Mammary epithelial cell (primary cell): ENCODE measurements at regions of chr11 and their contacts with region 1.

Region 1: DNA sequence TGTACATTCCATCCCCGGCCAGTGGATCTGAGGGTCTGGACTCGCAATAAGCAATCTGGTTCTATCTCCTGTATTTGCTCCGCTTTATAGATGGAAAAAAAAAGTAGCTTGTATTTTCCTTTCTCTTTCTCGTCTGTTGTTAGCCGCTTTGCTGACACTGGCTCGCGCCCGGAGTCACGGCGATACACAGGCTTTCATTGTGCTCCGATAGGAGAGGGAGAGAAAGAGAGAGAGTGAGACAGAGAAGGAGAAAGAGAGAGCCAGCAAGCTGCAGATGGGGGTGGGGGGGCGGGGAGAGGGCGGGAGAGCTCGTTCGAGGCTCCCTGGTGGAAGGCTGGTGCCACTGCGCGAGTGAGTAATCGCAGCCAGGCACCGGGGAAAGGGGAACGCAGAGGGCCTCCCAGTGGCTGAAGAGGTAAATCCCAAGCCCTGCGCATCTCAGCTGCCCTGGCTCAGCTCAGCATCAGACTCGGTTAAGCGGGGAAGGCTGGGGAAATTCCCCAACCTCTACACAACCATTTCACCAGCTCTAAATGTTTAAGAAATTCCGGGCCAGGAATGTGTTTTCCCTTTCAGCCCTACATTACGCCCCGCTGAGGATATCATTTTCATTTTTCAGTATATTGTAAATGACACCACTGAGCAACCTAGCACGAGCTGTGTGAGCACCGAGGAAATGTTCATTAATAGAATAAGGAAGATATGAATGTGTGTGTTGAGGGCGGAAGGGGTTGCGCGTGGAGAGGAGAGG is at the start of gene MAML2:
- DNase-seq: peak; percentile 92
- H3K4me3 ChIP-seq: peak within 1 kb of the TSS; percentile 58 to 79 (median 77)
- H3K27ac ChIP-seq: peak within 1 kb of the TSS; percentile 79
- H3K4me1 ChIP-seq: peaks cover 39% of the 10 kb centered on the region
- H3K27me3 ChIP-seq: no peaks in the 10 kb centered on the region
- CTCF ChIP-seq: peak; percentile 86 to 96
- total RNA-seq, gene MAML2: 9.5 to 14.2 TPM

Region 2: GRCh38 chr11:95849087-95849825 is 493.9 kb before region 1 on chr11:
- CTCF ChIA-PET with region 1: interaction called, 9 read pairs
- dilution Hi-C with region 1: no loop called
- in situ Hi-C with region 1: no loop called
- intact Hi-C with region 1: loop called (anchors 1 kb)
- DNase-seq: peak; percentile 67
- H3K4me3 ChIP-seq: no peak overlapping the region
- H3K27ac ChIP-seq: no peak overlapping the region
- H3K4me1 ChIP-seq: no peaks in the 10 kb centered on the region
- H3K27me3 ChIP-seq: no peaks in the 10 kb centered on the region
- CTCF ChIP-seq: peak; percentile 47 to 53

Region 3: DNA sequence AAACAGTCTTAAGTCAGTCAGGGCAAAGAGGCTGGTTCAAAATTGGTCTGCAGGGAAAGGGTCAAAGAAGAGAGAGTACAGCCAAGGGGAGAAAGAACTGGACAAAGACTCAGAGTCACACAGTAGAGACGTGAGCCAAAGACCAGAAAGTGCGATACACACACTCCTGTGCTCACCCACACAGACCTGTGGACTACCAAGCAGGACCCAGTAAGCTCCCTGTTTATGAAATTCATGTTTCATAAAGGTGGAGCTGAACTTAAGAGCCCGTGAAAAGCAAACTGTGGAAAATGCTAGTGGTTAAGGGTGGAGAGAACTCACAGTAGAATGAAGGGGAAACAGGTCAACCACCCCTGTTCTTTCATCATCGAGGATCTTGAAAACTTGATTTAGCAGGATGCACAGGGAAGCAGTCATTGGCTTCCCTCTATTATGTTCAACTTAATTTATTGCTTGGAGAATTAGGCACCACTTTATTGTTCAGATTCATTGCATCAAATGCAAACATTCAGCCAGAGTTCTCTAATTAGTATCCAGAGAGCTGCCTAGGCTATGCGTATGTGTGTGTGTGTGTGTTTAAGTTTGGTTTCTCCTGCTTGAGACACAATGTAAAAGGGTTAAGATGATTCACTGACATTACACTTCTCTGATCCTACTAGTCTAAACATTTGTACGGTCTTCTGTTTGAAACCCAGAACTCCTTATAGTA is 258.4 kb before region 1 on chr11:
- CTCF ChIA-PET with region 1: interaction called, 21 read pairs
- dilution Hi-C with region 1: no loop called
- in situ Hi-C with region 1: no loop called
- intact Hi-C with region 1: no loop called
- DNase-seq: no peak
- H3K4me3 ChIP-seq: no peak overlapping the region
- H3K27ac ChIP-seq: no peak overlapping the region
- H3K4me1 ChIP-seq: no peaks in the 10 kb centered on the region
- H3K27me3 ChIP-seq: no peaks in the 10 kb centered on the region
- CTCF ChIP-seq: no peak

Region 4: GRCh38 chr11:96155627-96156378 is 187.3 kb before region 1 on chr11:
- CTCF ChIA-PET with region 1: interaction called, 14 read pairs
- dilution Hi-C with region 1: no loop called
- in situ Hi-C with region 1: no loop called
- intact Hi-C with region 1: loop called (anchors 1 kb)
- DNase-seq: peak; percentile 93
- H3K4me3 ChIP-seq: no peak overlapping the region
- H3K27ac ChIP-seq: peak overlapping the region; percentile 92
- H3K4me1 ChIP-seq: peaks cover 41% of the 10 kb centered on the region
- H3K27me3 ChIP-seq: no peaks in the 10 kb centered on the region
- CTCF ChIP-seq: peak in 1 of 2 donors; percentile 34

Region 5: GRCh38 chr11:96263361-96263763 is 79.8 kb before region 1 on chr11:
- CTCF ChIA-PET with region 1: no interaction called
- dilution Hi-C with region 1: loop called (anchors 5 kb)
- in situ Hi-C with region 1: no loop called
- intact Hi-C with region 1: loop called (anchors 1 kb)
- DNase-seq: peak; percentile 83
- H3K4me3 ChIP-seq: no peak overlapping the region
- H3K27ac ChIP-seq: no peak overlapping the region
- H3K4me1 ChIP-seq: peaks cover 47% of the 10 kb centered on the region
- H3K27me3 ChIP-seq: no peaks in the 10 kb centered on the region
- CTCF ChIP-seq: no peak

Region 6: GRCh38 chr11:96314326-96315020 is 28.7 kb before region 1 on chr11:
- CTCF ChIA-PET with region 1: interaction called, 3 read pairs
- dilution Hi-C with region 1: no loop called
- in situ Hi-C with region 1: no loop called
- intact Hi-C with region 1: loop called (anchors 2 kb)
- DNase-seq: peak; percentile 49
- H3K4me3 ChIP-seq: no peak overlapping the region
- H3K27ac ChIP-seq: peak overlapping the region; percentile 84
- H3K4me1 ChIP-seq: peaks cover 85% of the 10 kb centered on the region
- H3K27me3 ChIP-seq: no peaks in the 10 kb centered on the region
- CTCF ChIP-seq: no peak

Region 7: DNA sequence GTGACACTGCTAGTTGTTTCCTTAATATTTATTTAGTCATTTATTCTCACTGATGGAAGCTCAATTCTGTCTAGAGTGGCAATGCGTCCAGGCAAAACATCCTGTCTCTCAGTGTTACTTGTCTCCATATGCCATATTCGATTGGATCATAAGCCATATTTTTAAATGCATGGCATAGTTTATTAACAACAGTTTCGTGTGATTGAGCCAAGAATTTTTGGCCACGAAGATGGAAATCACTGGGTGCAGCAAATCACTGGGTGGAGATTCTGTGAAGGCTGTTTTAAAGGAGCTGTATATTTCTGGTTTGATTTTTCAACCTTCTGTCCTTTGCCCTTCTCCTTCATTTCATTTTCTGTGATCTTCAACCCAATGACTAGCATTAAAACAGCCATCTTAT is 251.9 kb after region 1 on chr11:
- CTCF ChIA-PET with region 1: no interaction called
- dilution Hi-C with region 1: no loop called
- in situ Hi-C with region 1: no loop called
- intact Hi-C with region 1: no loop called
- DNase-seq: no peak
- H3K4me3 ChIP-seq: no peak overlapping the region
- H3K27ac ChIP-seq: no peak overlapping the region
- H3K4me1 ChIP-seq: no peaks in the 10 kb centered on the region
- H3K27me3 ChIP-seq: no peaks in the 10 kb centered on the region
- CTCF ChIP-seq: no peak